ENCODE measurements at regions of chr12 and their contacts with region 1.

Region 1: DNA sequence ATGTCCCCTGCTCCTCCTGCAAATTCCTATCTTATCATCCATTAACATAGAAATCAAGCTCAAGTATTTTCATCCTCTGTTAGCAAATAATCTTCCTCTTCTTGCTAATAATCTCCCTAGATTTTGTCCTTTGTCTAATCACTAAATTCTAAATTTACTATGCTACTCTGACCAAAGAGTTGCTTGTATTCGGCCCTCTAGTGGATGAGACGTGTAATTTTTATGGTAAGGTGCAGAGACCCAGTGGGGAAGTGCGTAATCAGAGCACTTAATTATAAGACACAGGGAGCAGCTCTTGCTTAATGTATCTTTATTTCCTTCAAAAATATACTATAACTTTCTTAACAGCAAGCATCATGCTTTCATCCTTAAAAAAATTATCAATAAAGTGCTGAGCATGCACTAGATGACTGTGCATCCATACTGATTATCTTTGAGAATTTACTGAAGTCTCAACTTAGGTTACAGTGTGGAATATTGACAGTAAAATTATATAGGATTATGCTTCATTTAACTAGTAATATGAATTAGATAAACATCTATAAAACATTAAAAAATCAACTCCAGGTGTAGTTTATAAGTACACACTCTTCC is 212.6 kb downstream of the SLC16A7 start:
- DNase-seq: peak; percentile 43
- H3K4me3 ChIP-seq: no peak overlapping the region; a peak in 1 of 4 replicates
- H3K27ac ChIP-seq: no peak overlapping the region
- H3K4me1 ChIP-seq: no peaks in the 10 kb centered on the region
- H3K27me3 ChIP-seq: no peaks in the 10 kb centered on the region; the same call in 1 of the 2 replicates
- CTCF ChIP-seq: peak; percentile 82
- EP300 ChIP-seq: no peak
- RAD21 ChIP-seq: peak; percentile 37

Region 2: GRCh38 chr12:59820594-59821011 is 12.2 kb after region 1 on chr12:
- CTCF ChIA-PET with region 1: interaction called, 17 read pairs
- POLR2A ChIA-PET with region 1: no interaction called
- DNase-seq: no peak
- H3K4me3 ChIP-seq: no peak overlapping the region
- H3K27ac ChIP-seq: no peak overlapping the region
- H3K4me1 ChIP-seq: no peaks in the 10 kb centered on the region
- H3K27me3 ChIP-seq: no peaks in the 10 kb centered on the region
- CTCF ChIP-seq: no peak
- EP300 ChIP-seq: no peak
- RAD21 ChIP-seq: no peak

Region 3: DNA sequence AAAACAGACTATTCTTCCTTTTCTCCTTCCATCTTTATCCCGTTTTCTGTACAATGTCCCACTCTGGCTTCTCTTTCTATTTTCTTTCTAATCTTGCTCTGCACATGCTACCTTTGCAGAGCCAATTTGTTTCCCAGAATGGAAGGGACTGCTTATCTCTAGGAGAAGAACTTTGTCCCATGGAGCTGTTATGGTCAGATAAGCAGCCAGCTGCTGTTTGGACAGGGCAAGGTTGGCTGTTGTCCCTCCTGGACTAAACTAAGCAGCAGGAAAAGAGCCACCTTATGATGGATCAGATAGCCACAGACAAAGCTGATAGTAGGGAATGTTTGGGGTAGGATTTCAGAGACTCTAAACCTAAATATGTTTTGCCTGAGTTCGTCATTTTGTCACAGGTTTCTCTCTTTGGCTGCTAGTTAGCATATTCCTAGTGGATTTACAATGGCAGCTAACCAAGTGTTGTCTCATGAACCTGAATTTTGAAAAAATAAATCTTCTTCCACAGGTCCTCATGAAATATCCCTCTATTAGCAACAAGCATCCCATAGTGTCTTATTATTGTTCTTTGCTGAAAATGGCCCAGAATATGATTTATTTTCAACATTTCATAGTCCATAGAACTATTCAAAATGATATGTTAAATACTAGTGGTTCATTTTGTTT is 50.2 kb after region 1 on chr12:
- CTCF ChIA-PET with region 1: no interaction called
- POLR2A ChIA-PET with region 1: no interaction called
- DNase-seq: no peak
- H3K4me3 ChIP-seq: no peak overlapping the region
- H3K27ac ChIP-seq: no peak overlapping the region
- H3K4me1 ChIP-seq: no peaks in the 10 kb centered on the region
- H3K27me3 ChIP-seq: no peaks in the 10 kb centered on the region
- CTCF ChIP-seq: no peak
- EP300 ChIP-seq: no peak
- RAD21 ChIP-seq: no peak